CD14-positive monocyte (primary cell): ENCODE measurements at regions of chr1 and their contacts with region 1.

Region 1: GRCh38 chr1:30718636-30719405 is 4.6 kb downstream of the MATN1 start:
- DNase-seq: peak; percentile 97 to 99 (median 98)
- H3K4me3 ChIP-seq: peak overlapping the region; percentile 0 to 69 (median 49)
- H3K4me3 Mint-ChIP-seq: peak overlapping the region; percentile 39 to 58
- H3K27ac ChIP-seq: peak overlapping the region; percentile 95 to 97
- H3K27ac Mint-ChIP-seq: peak overlapping the region; percentile 87 to 97 (median 93)
- H3K4me1 ChIP-seq: peaks cover 27 to 33% of the 10 kb centered on the region in 2 donors
- H3K4me1 Mint-ChIP-seq: peaks cover 24% of the 10 kb centered on the region
- H3K27me3 ChIP-seq: no peaks in the 10 kb centered on the region
- H3K27me3 Mint-ChIP-seq: peaks cover 0 to 3% (median 2%) of the 10 kb centered on the region in 3 donors
- CTCF ChIP-seq: peak; percentile 100

Region 2: DNA sequence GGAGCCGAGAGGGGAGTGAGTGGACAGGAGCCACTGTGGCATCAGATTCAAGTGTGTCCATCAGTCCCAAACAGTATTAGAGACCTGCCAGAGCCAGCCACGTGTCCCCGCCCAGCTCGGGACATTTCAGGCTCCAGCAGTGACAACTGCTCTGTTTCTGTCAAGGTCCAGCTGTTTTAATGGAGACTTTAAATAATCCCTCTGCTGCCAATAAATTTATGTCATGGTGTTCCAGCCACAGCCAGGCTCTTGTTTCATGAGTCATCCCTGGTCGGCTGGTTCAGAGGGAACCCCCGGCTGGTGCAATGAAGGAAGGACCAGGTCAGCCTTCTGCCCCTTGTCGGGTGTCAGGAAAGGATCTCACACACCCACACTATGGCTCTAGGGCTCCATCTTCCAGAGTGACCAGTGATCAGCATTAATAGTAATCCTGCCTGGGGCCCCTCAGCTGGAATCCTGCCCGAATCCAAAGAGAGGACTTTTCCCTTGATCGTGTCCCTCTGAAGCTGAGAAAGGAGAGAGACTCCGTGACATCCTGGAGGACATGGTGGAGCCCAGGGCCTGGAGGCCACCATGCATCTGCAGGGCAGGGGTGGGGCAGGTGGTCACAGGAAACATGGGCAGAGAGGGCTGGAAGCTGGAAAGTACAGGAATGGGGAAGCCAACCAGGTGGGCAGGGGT is 192.7 kb before region 1 on chr1:
- intact Hi-C with region 1: no loop called
- DNase-seq: no peak
- H3K4me3 ChIP-seq: no peak overlapping the region
- H3K4me3 Mint-ChIP-seq: no peak overlapping the region
- H3K27ac ChIP-seq: no peak overlapping the region
- H3K27ac Mint-ChIP-seq: no peak overlapping the region
- H3K4me1 ChIP-seq: no peaks in the 10 kb centered on the region
- H3K4me1 Mint-ChIP-seq: no peaks in the 10 kb centered on the region
- H3K27me3 ChIP-seq: no peaks in the 10 kb centered on the region
- H3K27me3 Mint-ChIP-seq: peaks cover 11 to 15% (median 12%) of the 10 kb centered on the region in 3 donors
- CTCF ChIP-seq: no peak

Region 3: GRCh38 chr1:30756545-30757195 is 37.8 kb after region 1 on chr1:
- intact Hi-C with region 1: loop called (anchors 2 kb)
- DNase-seq: peak; percentile 99 to 100 (median 100)
- H3K4me3 ChIP-seq: peak overlapping the region; percentile 86 to 96 (median 96)
- H3K4me3 Mint-ChIP-seq: peak overlapping the region; percentile 92 to 97
- H3K27ac ChIP-seq: peak overlapping the region; percentile 97 to 100
- H3K27ac Mint-ChIP-seq: peak overlapping the region; percentile 99 to 100 (median 100)
- H3K4me1 ChIP-seq: peaks cover 84 to 87% of the 10 kb centered on the region in 2 donors
- H3K4me1 Mint-ChIP-seq: peaks cover 66% of the 10 kb centered on the region
- H3K27me3 ChIP-seq: no peaks in the 10 kb centered on the region
- H3K27me3 Mint-ChIP-seq: peaks cover 0 to 3% (median 0%) of the 10 kb centered on the region in 3 donors
- CTCF ChIP-seq: no peak

Region 4: DNA sequence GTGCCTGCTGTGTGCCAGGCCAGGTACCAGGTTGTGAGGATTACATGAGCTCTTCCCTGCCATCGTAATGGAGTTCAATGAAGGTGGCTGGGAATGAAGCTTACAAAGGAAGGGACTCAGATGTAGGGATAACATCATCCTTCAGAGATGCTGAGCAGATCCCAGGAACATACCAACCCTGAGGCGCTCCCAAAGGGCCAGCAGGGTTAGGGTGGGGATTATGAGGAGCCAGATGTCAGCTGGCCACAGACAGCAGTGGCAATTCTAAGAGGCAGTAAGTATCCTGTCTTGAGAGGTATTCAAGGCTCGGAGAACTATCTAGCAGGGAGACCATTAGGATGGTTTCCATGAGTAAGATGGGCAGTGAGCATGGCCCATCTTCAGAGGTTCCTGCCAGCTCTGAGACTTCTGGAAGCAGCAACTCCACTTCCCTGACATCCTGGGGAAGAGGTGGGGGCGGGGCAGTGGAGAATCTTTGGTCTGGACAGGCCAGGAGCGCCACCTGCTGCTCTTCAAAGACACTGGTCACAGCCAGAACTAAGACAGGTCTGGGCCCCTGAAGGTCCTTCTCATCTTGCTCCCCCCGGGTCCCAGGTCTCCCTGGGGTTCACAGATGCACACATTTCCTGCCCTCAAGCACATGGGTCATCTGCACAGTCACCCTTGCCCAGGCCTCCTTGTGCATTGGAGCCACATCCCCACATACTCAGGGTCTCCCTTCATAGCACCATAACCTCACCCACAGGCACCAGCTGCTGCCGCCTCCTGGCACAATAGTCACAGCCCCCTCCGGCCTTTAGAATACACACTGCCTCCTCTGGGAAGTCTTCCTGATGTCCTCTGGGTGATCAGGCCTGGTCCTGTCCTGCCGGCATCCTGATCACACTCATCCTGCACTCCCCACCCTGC is 192.5 kb after region 1 on chr1:
- intact Hi-C with region 1: loop called (anchors 5 kb)
- DNase-seq: peak; percentile 60 to 76 (median 72)
- H3K4me3 ChIP-seq: peak overlapping the region in 1 of 3 experiments; percentile 18
- H3K4me3 Mint-ChIP-seq: peak overlapping the region in 1 of 2 donors; percentile 60
- H3K27ac ChIP-seq: no peak overlapping the region
- H3K27ac Mint-ChIP-seq: peak overlapping the region in 3 of 7 donors; percentile 26 to 56 (median 31)
- H3K4me1 ChIP-seq: peaks cover 68% of the 10 kb centered on the region in 2 donors
- H3K4me1 Mint-ChIP-seq: peaks cover 67% of the 10 kb centered on the region
- H3K27me3 ChIP-seq: peaks cover 14 to 28% of the 10 kb centered on the region in 2 donors
- H3K27me3 Mint-ChIP-seq: peaks cover 30 to 37% (median 31%) of the 10 kb centered on the region in 3 donors
- CTCF ChIP-seq: peak; percentile 82

Region 5: GRCh38 chr1:30929135-30929889 is 210.5 kb after region 1 on chr1:
- intact Hi-C with region 1: loop called (anchors 5 kb)
- DNase-seq: peak; percentile 42 to 59 (median 54)
- H3K4me3 ChIP-seq: no peak overlapping the region
- H3K4me3 Mint-ChIP-seq: no peak overlapping the region
- H3K27ac ChIP-seq: no peak overlapping the region
- H3K27ac Mint-ChIP-seq: peak overlapping the region in 2 of 7 donors; percentile 26 to 30
- H3K4me1 ChIP-seq: peaks cover 6 to 8% of the 10 kb centered on the region in 2 donors
- H3K4me1 Mint-ChIP-seq: peaks cover 8% of the 10 kb centered on the region
- H3K27me3 ChIP-seq: no peaks in the 10 kb centered on the region
- H3K27me3 Mint-ChIP-seq: peaks cover 2 to 4% (median 3%) of the 10 kb centered on the region in 3 donors
- CTCF ChIP-seq: peak; percentile 91